ENCODE measurements at regions of chr15 and their contacts with region 1.

Region 1: DNA sequence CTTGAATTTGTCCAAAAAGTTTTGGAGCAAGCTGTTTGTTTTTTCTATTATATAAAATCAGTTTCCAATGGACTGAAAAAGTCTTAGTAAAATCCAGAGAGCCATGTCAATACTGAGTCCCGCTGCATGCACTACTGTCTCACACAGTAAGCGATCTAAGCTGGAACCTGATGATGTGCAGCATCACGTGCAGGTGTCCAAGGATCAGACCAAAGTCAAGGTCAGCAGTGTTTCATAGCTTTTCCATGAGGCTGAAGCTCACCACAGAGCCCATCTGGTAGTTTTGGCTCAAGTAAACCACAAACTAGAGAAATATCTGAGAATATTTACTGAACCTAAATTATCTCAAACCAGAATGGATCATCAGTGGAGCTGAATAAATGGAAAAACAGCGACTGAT is 784.0 kb upstream of the SEMA6D start:
- DNase-seq: no peak
- H3K4me3 Mint-ChIP-seq: no peak overlapping the region
- H3K27ac Mint-ChIP-seq: no peak overlapping the region
- H3K4me1 Mint-ChIP-seq: no peaks in the 10 kb centered on the region
- H3K27me3 Mint-ChIP-seq: no peaks in the 10 kb centered on the region

Region 2: DNA sequence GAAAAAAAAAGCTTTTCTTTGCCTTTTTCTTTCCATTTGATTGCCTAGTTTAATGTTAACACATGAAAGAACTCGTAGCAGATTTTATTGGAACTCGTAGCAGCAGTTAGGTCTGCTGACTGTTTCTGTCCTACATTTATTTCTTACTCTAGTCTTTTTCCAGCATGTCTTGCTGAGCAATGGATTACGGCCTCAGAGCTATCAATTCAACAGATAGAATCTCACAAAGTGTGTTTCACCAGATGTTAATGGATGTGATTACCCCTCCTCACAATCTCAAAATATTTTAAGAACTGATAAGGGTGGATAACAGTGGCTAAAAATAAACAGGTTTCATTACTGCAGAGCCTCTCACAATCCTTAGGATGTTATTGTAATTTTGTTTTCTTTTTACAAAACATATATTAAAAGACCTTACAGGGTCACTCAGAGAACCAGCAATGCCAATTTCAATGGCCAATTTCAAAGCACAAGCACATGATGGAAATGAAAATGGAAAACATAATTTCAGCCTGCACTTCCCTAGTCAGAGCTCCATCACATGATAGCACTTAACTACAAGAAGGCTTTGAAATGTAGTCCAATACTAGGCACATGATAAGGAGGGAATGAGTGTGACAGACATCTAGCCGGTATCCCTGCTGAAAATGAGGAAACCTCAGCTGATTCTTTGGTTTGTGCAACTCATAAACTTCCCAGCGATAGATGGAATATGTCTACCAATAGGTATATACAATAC is 54.1 kb before region 1 on chr15:
- intact Hi-C with region 1: loop called (anchors 10 kb)
- DNase-seq: no peak
- H3K4me3 Mint-ChIP-seq: no peak overlapping the region
- H3K27ac Mint-ChIP-seq: no peak overlapping the region
- H3K4me1 Mint-ChIP-seq: no peaks in the 10 kb centered on the region
- H3K27me3 Mint-ChIP-seq: no peaks in the 10 kb centered on the region

Region 3: DNA sequence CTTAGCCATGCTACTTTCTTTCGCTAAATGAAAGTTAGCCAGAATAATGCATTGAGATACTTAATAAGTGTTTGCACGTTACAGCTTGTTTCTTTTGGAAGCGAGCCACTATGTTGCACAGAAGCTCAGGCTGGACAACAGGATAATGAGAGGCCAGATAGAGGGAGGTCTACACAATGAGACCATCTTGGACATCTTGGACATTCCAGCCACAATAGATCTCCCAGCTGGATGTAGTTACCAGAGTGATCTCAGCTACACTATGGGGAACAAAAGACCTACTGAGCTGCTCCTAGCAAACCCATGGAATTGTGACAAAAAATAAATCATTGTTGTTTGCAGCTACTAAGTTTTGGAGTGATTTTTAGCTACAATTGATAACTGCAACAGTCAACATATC is 243.8 kb after region 1 on chr15:
- intact Hi-C with region 1: no loop called
- DNase-seq: no peak
- H3K4me3 Mint-ChIP-seq: no peak overlapping the region
- H3K27ac Mint-ChIP-seq: no peak overlapping the region
- H3K4me1 Mint-ChIP-seq: no peaks in the 10 kb centered on the region
- H3K27me3 Mint-ChIP-seq: no peaks in the 10 kb centered on the region

Measured in activated T-helper 1 cell treated with anti-CD3 and anti-CD28 coated beads, Interleukin-12 subunit alpha, Interleukin-12 subunit beta, Interleukin-2, Interleukin-4 antibody, amounts not matched to agents 30 ng/mL and 10 ng/mL and 1 ng/mL, durations not matched to agents 14 hours and 24 hours and 36 hours (primary cell).